Activated T-helper 1 cell treated with anti-CD3 and anti-CD28 coated beads, Interleukin-12 subunit alpha, Interleukin-12 subunit beta, Interleukin-2, Interleukin-4 antibody, amounts not matched to agents 30 ng/mL and 10 ng/mL and 1 ng/mL, durations not matched to agents 14 hours and 24 hours and 36 hours (primary cell): ENCODE measurements at regions of chr17 and their contacts with region 1.

Region 1: GRCh38 chr17:56020369-56020768 is 132.9 kb upstream of the ANKFN1 start:
- DNase-seq: no peak
- H3K4me3 Mint-ChIP-seq: no peak overlapping the region
- H3K27ac Mint-ChIP-seq: peak overlapping the region; percentile 27
- H3K4me1 Mint-ChIP-seq: peaks cover 30% of the 10 kb centered on the region
- H3K27me3 Mint-ChIP-seq: peaks cover 2% of the 10 kb centered on the region

Region 2: DNA sequence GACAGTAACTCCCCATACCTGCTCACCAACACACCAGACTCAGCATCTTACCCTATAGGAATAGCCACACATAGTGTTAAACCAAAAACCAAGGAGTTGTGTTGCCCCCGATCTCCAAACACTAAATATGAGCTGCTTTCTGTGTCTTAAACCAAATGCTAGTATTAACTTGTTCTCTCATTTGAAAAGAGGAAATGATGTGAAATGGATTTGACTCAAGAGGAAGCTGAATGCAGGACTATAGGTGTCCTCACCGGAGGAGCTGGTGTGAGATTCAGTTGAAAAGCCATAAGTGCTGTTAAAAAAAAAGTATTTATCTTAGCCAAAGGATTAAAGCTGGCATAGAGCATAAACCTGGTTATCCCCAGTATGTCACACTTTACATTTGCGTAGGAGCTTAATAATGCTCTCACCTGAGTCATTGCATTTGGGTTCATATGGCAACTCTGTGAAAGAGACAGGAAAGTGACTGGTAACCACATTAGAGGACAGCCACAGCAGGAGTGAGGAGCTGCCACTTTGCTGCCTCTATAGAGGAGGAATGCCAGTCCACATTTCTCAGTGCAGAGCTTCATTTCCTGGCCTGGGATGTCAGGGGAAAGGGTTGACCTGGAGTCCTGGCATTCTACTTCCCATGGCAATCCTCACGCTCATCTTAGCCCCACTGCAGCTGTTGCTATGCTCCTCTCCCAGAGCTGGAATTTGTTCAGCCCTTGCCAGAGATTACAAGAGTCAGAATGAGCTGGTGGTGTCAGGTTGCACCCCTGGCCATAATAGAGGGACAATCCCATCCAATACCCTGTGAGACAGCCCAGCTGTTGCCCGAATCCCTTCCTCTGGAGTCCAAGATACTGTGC is 10.3 kb before region 1 on chr17:
- intact Hi-C with region 1: no loop called
- DNase-seq: no peak
- H3K4me3 Mint-ChIP-seq: no peak overlapping the region
- H3K27ac Mint-ChIP-seq: no peak overlapping the region
- H3K4me1 Mint-ChIP-seq: peaks cover 20% of the 10 kb centered on the region
- H3K27me3 Mint-ChIP-seq: peaks cover 1% of the 10 kb centered on the region

Region 3: GRCh38 chr17:56297184-56297583 is 276.8 kb after region 1 on chr17:
- intact Hi-C with region 1: loop called (anchors 10 kb)
- DNase-seq: peak; percentile 33
- H3K4me3 Mint-ChIP-seq: peak overlapping the region; percentile 43
- H3K27ac Mint-ChIP-seq: peak overlapping the region; percentile 9
- H3K4me1 Mint-ChIP-seq: peaks cover 27% of the 10 kb centered on the region
- H3K27me3 Mint-ChIP-seq: no peaks in the 10 kb centered on the region

Region 4: GRCh38 chr17:56424543-56425044 is 404.2 kb after region 1 on chr17:
- intact Hi-C with region 1: loop called (anchors 5 kb)
- DNase-seq: no peak
- H3K4me3 Mint-ChIP-seq: no peak overlapping the region
- H3K27ac Mint-ChIP-seq: no peak overlapping the region
- H3K4me1 Mint-ChIP-seq: peaks cover 14% of the 10 kb centered on the region
- H3K27me3 Mint-ChIP-seq: peaks cover 7% of the 10 kb centered on the region